Posterior cingulate gyrus (tissue), 11 donors: ENCODE measurements at regions of chrX and their contacts with region 1.

Region 1: GRCh38 chrX:72126539-72127140 is 5.1 kb downstream of the RTL5 start:
- DNase-seq: peak; percentile 69 to 96 (median 84)

Region 2: GRCh38 chrX:72003811-72004750 is 122.6 kb before region 1 on chrX:
- intact Hi-C with region 1: loop called (anchors 5 kb)
- DNase-seq: peak in 7 of 10 donors; percentile 15 to 86 (median 29)

Region 3: DNA sequence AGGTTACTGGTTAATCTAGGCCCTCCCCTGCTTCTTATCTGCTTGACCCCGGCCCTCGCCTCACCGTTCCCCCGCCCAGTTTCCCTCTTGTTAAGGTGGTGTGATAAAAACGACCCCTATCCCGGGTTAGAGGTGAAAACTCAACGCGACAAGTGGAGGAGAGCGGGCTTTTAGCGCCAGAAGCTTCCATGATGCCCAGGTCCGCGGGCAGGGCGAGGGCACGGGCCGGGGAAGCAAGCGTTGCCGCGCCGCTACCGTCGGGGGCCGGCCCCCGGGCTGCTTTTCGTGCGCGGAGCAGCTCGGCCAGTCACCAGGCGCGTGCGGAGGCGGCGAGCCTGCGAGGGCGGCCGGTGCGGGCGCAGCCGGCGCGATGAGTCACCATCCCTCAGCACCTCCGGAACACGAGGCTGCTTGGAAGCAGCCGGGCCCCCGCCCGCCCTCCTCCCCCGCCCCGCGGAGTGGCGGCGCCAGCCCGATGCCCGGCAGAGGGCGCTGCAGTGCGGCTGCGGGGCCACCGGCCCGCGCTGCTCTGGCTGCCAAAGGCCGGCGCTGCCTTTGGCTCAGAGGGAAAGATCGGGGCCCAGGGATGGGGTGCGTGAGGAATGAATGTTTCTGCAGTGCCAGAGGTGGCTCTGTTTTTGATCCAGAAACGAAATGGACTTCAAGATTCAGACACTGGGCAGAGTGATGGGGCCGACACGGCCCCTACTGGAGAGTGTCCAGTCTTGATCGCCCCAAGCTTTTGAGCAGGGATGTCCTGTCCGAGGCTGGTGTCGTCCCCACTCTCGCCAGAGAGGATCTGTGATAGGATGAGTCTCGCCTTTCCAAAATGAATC is 108.1 kb before region 1 on chrX:
- intact Hi-C with region 1: loop called (anchors 1 kb)
- DNase-seq: peak; percentile 58 to 97 (median 72)

Region 4: GRCh38 chrX:72181178-72182125 is 54.8 kb after region 1 on chrX and contains the start of gene PIN4:
- intact Hi-C with region 1: loop called (anchors 5 kb)
- DNase-seq: peak; percentile 83 to 99 (median 90)